ENCODE measurements at regions of chr11 and their contacts with region 1.

Region 1: DNA sequence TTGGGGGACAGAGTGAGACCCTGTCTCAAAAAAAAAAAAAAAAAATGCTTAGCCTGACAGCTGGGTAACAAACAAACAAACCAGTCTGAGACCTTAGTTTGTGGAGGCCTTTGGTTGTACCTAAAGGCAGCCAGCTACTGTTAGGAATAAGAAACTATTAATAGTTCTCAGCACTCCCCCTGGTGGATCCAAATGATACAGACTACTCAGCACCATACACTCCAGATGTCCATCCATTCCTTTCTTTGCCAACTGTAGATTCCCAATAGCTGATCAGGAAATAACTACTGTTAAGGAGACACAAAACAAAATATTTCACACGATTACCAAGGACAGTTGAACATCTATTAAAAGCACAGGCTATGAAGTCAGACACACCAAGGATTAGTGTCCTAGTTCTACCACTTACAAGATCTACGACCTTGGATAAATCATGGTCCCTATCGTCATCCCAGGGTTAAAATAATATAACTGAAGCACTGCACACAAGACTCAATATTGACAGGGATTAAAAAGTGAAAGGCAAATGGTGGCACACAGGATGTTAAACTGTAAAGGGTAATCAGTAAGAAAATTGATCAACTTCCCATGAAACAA is 17.2 kb downstream of the CLDN25 start:
- DNase-seq: peak; percentile 66
- H3K4me3 Mint-ChIP-seq: no peak overlapping the region
- H3K27ac Mint-ChIP-seq: no peak overlapping the region
- H3K4me1 Mint-ChIP-seq: no peaks in the 10 kb centered on the region
- H3K27me3 Mint-ChIP-seq: no peaks in the 10 kb centered on the region
- CTCF ChIP-seq: peak; percentile 55

Region 2: GRCh38 chr11:113305440-113306336 is 491.1 kb before region 1 on chr11:
- CTCF ChIA-PET with region 1: interaction called, 21 read pairs
- POLR2A ChIA-PET with region 1: interaction called, 4 read pairs
- intact Hi-C with region 1: loop called (anchors 1 kb)
- DNase-seq: peak; percentile 79
- H3K4me3 Mint-ChIP-seq: no peak overlapping the region
- H3K27ac Mint-ChIP-seq: no peak overlapping the region
- H3K4me1 Mint-ChIP-seq: peaks cover 5% of the 10 kb centered on the region
- H3K27me3 Mint-ChIP-seq: peaks cover 13% of the 10 kb centered on the region
- CTCF ChIP-seq: peak; percentile 98

Region 3: GRCh38 chr11:113778111-113778910 is 18.4 kb before region 1 on chr11:
- CTCF ChIA-PET with region 1: interaction called, 10 read pairs
- POLR2A ChIA-PET with region 1: interaction called, 5 read pairs
- intact Hi-C with region 1: loop called (anchors 2 kb)
- DNase-seq: peak; percentile 63
- H3K4me3 Mint-ChIP-seq: peak overlapping the region; percentile 72
- H3K27ac Mint-ChIP-seq: peak overlapping the region; percentile 86
- H3K4me1 Mint-ChIP-seq: peaks cover 7% of the 10 kb centered on the region
- H3K27me3 Mint-ChIP-seq: no peaks in the 10 kb centered on the region
- CTCF ChIP-seq: no peak